ENCODE measurements at regions of chr17 and their contacts with region 1.

Region 1: GRCh38 chr17:75456417-75457046 is at the start of gene TMEM94:
- DNase-seq: peak; percentile 84 to 98
- H3K4me3 ChIP-seq: peak within 1 kb of the TSS; percentile 75 to 80
- H3K27ac ChIP-seq: peak within 1 kb of the TSS; percentile 86 to 89
- H3K4me1 ChIP-seq: peaks cover 0 to 27% of the 10 kb centered on the region in 2 donors
- H3K27me3 ChIP-seq: no peaks in the 10 kb centered on the region
- CTCF ChIP-seq: no peak
- total RNA-seq, gene TMEM94: 125 TPM

Region 2: GRCh38 chr17:75151930-75152329 is 304.6 kb before region 1 on chr17:
- intact Hi-C with region 1: no loop called
- DNase-seq: no peak
- H3K4me3 ChIP-seq: no peak overlapping the region
- H3K27ac ChIP-seq: no peak overlapping the region
- H3K4me1 ChIP-seq: peaks cover 6% of the 10 kb centered on the region in 2 donors
- H3K27me3 ChIP-seq: no peaks in the 10 kb centered on the region
- CTCF ChIP-seq: no peak

Region 3: DNA sequence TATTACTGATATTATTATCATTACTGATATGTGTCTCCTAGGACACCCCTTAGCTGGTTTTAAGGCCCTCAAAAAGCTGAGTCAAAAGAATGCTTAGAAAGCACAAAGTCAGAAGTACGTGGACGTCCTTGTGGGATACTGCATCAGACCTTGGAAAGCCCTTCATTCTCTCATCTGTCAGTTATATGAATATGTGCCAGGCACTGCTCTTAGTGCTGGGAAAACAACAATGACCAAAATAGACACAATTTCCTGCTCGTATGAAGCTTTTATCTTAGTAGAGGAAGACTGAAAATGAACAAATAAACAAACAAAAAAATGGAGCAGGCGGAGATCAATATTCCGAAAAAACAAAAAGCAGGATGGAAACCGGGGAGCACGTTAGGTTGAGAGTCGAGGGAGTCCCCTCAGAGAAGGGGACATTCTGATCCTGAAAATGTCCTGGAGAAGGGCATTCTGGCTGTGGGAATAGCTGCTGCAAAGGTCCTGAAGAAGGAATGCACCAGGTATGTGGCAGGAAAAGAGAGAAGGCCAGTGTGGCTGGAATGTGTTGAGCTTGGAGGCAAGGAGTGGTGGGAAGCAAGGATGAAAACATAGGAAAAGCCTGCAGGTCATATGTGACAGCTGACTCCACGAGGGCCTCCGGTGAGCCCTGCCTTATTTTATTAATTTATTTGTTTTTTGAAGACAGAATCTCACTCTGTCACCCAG is 15.6 kb before region 1 on chr17:
- intact Hi-C with region 1: loop called (anchors 1 kb)
- DNase-seq: no peak
- H3K4me3 ChIP-seq: no peak overlapping the region
- H3K27ac ChIP-seq: peak overlapping the region; percentile 92 to 98
- H3K4me1 ChIP-seq: peaks cover 7 to 34% of the 10 kb centered on the region in 2 donors
- H3K27me3 ChIP-seq: no peaks in the 10 kb centered on the region
- CTCF ChIP-seq: no peak

Region 4: DNA sequence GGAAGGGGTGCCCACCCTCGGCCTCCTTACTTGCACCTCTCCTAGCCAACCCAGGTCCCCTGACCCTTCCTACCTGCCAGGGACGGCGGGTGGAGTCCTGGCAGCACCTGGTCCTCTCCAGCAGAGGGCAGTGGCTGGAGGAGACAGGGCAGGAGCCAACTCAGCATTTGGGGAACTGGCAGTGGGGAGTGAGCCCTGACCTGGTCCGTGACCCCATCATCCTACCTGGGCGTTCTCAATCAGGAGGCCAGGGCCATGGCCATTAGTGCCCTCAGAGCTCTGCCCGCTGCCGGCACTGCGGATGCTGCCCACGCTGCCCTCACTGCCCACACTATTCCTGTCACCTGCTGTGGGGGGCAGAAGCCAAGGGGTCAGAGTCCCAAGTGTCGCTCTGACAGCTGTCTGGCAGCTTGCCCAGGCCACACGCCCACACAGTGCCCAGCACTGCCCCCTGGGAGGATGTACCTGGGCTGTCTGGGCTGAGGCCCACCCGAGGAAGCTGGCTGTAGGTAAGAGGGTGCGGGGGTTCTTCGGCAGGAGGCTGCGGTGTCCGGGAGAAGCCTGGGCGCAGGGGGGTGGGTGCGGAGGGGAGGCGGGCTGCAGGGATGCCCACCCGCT is 47.9 kb after region 1 on chr17:
- intact Hi-C with region 1: loop called (anchors 5 kb)
- DNase-seq: no peak
- H3K4me3 ChIP-seq: no peak overlapping the region
- H3K27ac ChIP-seq: no peak overlapping the region
- H3K4me1 ChIP-seq: peaks cover 2 to 19% of the 10 kb centered on the region in 2 donors
- H3K27me3 ChIP-seq: no peaks in the 10 kb centered on the region
- CTCF ChIP-seq: peak in 1 of 3 experiments; percentile 50

Region 5: DNA sequence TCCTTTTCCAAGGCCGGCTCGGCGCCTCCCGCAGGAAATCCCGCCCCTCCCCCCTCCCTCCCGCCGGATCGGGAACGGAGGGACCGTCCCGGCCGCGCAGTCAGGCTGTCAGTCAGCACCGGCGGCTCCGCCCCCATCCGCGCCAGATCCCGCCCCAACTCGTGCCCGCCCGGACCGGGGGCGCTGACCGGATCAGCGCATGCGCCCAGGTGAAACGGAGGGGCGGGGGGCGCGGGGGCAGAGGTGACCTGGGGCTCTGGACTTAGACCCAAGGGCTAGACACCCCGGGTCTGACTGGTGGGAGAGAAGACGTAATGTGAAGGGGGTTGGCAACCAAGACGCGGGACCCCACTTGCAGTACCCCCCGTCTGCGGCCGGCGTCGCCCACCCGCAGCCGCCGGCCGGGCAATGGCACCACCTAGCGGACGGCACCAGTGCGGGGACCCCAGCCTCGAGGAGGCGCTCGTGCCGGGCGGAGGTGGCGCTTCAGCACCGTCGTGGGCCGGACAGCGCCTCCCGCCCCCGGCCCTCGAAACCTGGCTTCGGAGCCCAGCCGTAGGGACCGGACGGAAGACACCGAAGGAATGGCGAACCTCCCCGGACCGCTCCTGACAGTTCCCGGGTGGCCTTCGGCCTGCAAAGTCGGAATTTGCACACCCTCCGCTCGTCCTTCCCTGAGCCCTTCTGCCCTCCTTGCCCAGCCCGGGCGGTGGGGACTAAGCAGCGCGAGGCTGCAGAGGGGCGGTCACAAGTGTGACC is 59.1 kb after region 1 on chr17 and contains the start of gene CASKIN2:
- intact Hi-C with region 1: loop called (anchors 2 kb)
- DNase-seq: peak; percentile 77 to 96
- H3K4me3 ChIP-seq: peak within 1 kb of the TSS; percentile 78 to 82
- H3K27ac ChIP-seq: peak within 1 kb of the TSS; percentile 74 to 88
- H3K4me1 ChIP-seq: peaks cover 25 to 41% of the 10 kb centered on the region in 2 donors
- H3K27me3 ChIP-seq: no peaks in the 10 kb centered on the region
- CTCF ChIP-seq: peak; percentile 99 to 100 (median 99)
- total RNA-seq, gene CASKIN2: 112 TPM